Natural killer cell (primary cell): ENCODE measurements at regions of chr11 and their contacts with region 1.

Region 1: GRCh38 chr11:114738954-114739353 is 60.6 kb downstream of the NXPE2 start:
- DNase-seq: peak in 1 of 2 donors; percentile 57
- ATAC-seq: peak in 1 of 3 donors; percentile 61
- H3K4me3 ChIP-seq: no peak overlapping the region
- H3K4me3 Mint-ChIP-seq: no peak overlapping the region
- H3K27ac ChIP-seq: no peak overlapping the region
- H3K27ac Mint-ChIP-seq: no peak overlapping the region
- H3K4me1 ChIP-seq: no peaks in the 10 kb centered on the region
- H3K4me1 Mint-ChIP-seq: no peaks in the 10 kb centered on the region
- H3K27me3 ChIP-seq: no peaks in the 10 kb centered on the region
- H3K27me3 Mint-ChIP-seq: peaks cover 6 to 9% of the 10 kb centered on the region in 2 donors
- CTCF ChIP-seq: peak; percentile 45

Region 2: DNA sequence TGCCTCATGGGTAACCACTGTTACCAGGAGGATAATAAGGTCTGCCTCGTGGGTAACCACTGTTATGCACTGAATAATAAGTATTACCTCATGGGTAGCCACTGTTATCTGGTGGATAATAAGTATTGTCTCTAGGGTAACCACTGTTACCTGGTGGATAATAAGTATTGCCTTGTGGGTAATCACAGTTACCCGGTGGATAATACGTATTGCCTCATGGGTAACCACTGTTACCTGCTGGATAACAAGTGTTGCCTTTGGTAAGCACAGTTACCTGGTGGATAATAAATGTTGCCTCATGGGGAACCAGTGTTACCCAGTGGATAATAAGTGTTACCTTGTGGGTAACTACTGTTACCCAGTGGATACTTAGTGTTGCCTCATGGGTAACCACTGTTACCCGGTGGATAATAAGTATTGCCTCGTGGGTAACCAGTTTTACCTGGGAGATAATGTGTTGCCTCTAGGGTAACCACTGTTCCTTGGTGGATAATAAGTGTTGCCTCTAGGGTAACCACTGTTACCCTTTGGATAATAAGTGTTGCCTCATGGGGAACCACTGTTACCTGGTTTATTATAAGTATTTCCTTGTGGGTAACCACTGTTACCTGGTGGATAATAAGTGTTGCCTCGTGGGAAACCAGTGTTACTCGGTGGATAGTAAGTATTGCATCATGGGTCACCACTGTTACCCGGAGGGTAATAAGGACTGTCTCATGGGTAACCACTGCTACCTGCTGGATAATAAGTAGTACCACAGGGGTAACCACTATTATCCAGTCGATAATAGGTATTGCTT is 132.8 kb before region 1 on chr11:
- intact Hi-C with region 1: no loop called
- DNase-seq: no peak
- ATAC-seq: no peak
- H3K4me3 ChIP-seq: no peak overlapping the region
- H3K4me3 Mint-ChIP-seq: no peak overlapping the region
- H3K27ac ChIP-seq: no peak overlapping the region
- H3K27ac Mint-ChIP-seq: no peak overlapping the region
- H3K4me1 ChIP-seq: no peaks in the 10 kb centered on the region
- H3K4me1 Mint-ChIP-seq: no peaks in the 10 kb centered on the region
- H3K27me3 ChIP-seq: no peaks in the 10 kb centered on the region
- H3K27me3 Mint-ChIP-seq: no peaks in the 10 kb centered on the region
- CTCF ChIP-seq: no peak

Region 3: DNA sequence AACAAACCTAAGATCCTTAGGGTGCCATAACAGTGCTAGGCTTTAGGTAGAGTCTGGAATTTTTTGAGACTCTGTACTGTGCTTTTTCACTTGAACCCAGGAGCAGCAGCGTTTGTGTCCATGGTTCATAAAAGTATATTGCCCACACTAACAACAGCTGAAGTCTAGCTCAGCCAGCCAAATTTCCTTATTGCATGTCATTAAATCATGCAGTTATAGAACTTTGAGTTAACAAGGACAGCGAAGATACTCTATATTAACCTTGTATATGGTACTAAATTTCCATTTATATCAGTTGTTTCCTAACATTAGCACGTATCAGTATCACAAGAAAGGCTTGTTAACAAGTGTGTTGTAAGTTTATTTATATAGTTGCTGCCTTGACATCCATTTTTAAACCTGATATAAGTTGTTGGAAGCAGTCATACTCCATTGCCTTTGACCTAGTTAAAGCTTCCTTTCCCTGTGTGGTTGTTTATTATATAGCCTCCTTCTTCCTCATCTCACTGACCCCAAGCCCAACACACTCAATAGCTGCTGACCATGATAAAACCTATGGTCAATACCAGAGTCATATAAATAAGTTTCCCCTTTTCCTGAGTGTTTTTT is 13.9 kb before region 1 on chr11:
- intact Hi-C with region 1: no loop called
- DNase-seq: no peak
- ATAC-seq: no peak
- H3K4me3 ChIP-seq: no peak overlapping the region
- H3K4me3 Mint-ChIP-seq: no peak overlapping the region
- H3K27ac ChIP-seq: no peak overlapping the region
- H3K27ac Mint-ChIP-seq: no peak overlapping the region
- H3K4me1 ChIP-seq: no peaks in the 10 kb centered on the region
- H3K4me1 Mint-ChIP-seq: no peaks in the 10 kb centered on the region
- H3K27me3 ChIP-seq: no peaks in the 10 kb centered on the region
- H3K27me3 Mint-ChIP-seq: peaks cover 8 to 11% of the 10 kb centered on the region in 2 donors
- CTCF ChIP-seq: no peak

Region 4: DNA sequence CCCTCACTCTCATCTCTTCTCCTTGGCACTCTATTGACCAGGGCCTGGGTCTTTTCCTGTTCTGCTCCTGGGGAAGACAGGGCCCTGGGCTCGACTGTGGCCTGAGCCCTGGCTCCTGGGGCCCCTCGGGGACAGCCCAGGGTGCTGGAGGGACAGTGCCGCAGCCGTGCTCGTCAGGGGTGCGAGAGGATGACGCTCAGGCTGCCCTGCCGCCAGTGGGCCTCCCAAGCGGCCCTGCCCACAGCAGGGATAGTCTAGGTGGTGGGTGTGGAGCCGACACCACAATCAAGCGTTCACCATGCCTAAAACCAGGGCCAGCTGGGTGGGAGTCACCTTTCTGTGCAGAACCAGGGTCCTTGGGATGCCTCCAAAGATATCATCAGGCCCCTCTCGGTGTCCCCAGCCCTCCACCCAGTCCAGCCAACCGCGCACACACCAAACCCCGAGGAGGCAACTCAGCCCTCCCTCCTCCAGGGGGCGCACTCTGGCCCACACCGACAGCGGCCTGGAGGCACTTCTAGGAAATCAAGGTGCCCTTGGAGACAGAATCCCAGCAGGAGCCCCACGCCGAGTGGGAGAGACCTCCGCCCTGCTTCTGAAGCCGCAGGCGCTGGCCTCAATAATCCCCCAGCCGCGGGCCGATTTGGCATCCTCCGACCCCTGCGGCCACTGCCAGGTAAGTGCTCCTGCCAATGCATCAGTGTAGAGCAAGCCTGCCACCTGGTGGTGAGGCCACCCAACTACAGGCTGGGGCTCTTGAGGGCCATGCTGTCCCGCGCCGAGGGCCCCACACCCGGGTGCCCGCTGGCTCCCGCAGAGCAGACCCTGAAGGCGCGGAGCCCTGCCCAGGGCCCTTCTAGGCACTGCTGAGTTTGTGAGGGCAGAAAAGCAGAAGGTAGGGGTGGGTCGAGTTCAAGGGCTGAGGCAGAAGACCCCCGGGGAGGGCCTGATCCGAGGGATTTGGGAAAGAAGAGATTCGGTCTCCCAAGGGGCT is 1537.4 kb after region 1 on chr11:
- intact Hi-C with region 1: loop called (anchors 5 kb)
- DNase-seq: peak; percentile 59 to 74
- ATAC-seq: peak; percentile 64 to 89 (median 76)
- H3K4me3 ChIP-seq: no peak overlapping the region
- H3K4me3 Mint-ChIP-seq: no peak overlapping the region
- H3K27ac ChIP-seq: no peak overlapping the region
- H3K27ac Mint-ChIP-seq: no peak overlapping the region
- H3K4me1 ChIP-seq: peaks cover 7% of the 10 kb centered on the region
- H3K4me1 Mint-ChIP-seq: peaks cover 0 to 6% of the 10 kb centered on the region in 2 donors
- H3K27me3 ChIP-seq: no peaks in the 10 kb centered on the region
- H3K27me3 Mint-ChIP-seq: peaks cover 0 to 14% of the 10 kb centered on the region in 2 donors
- CTCF ChIP-seq: peak; percentile 70